Activated CD4-positive, alpha-beta T cell treated with anti-CD3 and anti-CD28 coated beads for 36 hours (primary cell): ENCODE measurements at regions of chr18 and their contacts with region 1.

Region 1: GRCh38 chr18:267688-268552 is at the start of gene THOC1:
- DNase-seq: peak; percentile 98
- ATAC-seq: peak; percentile 92
- H3K4me3 Mint-ChIP-seq: peak within 1 kb of the TSS; percentile 100
- H3K27ac Mint-ChIP-seq: peak within 1 kb of the TSS; percentile 100
- H3K4me1 Mint-ChIP-seq: peaks cover 39% of the 10 kb centered on the region
- H3K27me3 Mint-ChIP-seq: no peaks in the 10 kb centered on the region
- total RNA-seq, gene THOC1: 62.1 to 64.6 TPM

Region 2: DNA sequence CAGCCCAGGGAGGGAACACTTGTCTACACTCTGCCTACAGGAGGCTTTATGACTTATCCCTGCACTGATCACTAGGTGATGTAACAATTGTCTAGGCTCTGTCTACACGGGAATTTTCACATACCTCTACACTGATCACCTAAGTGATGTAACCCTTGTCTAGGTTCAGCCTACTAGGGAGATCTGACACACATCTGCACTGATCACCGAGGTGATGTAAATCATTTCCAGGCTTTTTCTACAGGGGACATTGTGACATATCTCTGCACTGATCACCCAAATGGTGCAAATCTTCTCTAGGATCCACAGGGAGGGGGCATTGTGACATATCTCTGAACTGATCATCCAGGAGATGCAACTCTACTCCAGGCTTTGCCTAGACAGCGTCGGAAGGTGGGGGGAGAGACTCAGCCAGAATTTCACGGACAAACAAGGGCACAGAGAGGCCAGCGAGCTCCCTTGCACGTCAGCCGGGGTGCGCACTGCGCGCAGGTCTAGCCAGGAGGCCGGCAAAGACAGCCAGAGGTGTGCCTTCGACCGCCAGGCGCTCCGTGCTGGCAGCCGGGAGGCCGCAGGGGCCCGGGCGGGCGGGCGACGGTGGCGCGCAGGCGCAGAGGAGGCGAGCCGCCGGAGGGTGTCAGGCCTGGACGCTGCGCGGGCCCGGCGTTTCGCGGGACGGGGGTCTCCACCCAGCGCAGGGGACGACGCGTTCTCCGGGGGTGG is 156.5 kb before region 1 on chr18:
- CTCF ChIA-PET with region 1: no interaction called
- POLR2A ChIA-PET with region 1: no interaction called
- intact Hi-C with region 1: loop called (anchors 1 to 5 kb)
- DNase-seq: peak; percentile 80
- ATAC-seq: peak; percentile 64
- H3K4me3 Mint-ChIP-seq: peak overlapping the region; percentile 69
- H3K27ac Mint-ChIP-seq: peak overlapping the region; percentile 88
- H3K4me1 Mint-ChIP-seq: peaks cover 12% of the 10 kb centered on the region
- H3K27me3 Mint-ChIP-seq: no peaks in the 10 kb centered on the region

Region 3: GRCh38 chr18:712401-713134 is 444.6 kb after region 1 on chr18 and contains the start of gene ENOSF1:
- CTCF ChIA-PET with region 1: no interaction called
- POLR2A ChIA-PET with region 1: no interaction called
- intact Hi-C with region 1: loop called (anchors 2 kb)
- DNase-seq: peak; percentile 95
- ATAC-seq: peak; percentile 91
- H3K4me3 Mint-ChIP-seq: peak within 1 kb of the TSS; percentile 94
- H3K27ac Mint-ChIP-seq: peak within 1 kb of the TSS; percentile 99
- H3K4me1 Mint-ChIP-seq: peaks cover 53% of the 10 kb centered on the region
- H3K27me3 Mint-ChIP-seq: no peaks in the 10 kb centered on the region
- total RNA-seq, gene ENOSF1: 92.6 to 97.4 TPM